ENCODE measurements at regions of chrX and their contacts with region 1.

Region 1: GRCh38 chrX:69387567-69388487 is 116.3 kb upstream of the NALF2 start:
- DNase-seq: peak; percentile 82
- ATAC-seq: peak; percentile 98
- H3K4me3 Mint-ChIP-seq: no peak overlapping the region
- H3K27ac Mint-ChIP-seq: no peak overlapping the region
- H3K4me1 Mint-ChIP-seq: peaks cover 23% of the 10 kb centered on the region
- H3K27me3 Mint-ChIP-seq: peaks cover 28% of the 10 kb centered on the region
- CTCF ChIP-seq: peak; percentile 63

Region 2: DNA sequence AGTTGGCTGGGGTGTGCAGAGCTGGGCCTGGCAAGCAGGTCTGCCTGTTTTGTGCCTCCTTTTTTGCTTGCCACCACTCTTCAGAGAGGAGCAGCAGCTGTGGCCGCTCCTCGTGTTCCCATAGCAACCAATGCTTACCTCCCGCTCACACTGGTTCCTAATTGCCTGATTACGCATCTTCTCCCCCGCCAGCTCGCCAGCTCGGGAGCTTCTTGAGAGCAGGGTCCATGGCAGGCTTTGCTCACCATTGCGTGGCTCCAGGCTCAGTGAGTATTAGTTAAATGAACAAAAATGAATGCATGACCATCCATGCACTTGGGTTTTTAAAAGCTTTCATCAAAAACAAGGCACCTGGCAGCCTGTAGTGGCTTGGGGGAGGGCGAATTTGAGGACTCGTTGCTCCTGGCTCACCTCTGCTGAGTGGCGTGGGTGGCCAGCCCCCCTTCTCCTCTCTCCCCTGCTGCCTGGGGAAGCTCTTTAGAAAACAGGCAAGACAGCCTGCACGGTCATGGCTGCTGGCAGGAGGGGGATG is 208.4 kb before region 1 on chrX:
- CTCF ChIA-PET with region 1: interaction called, 11 read pairs
- POLR2A ChIA-PET with region 1: no interaction called
- DNase-seq: peak; percentile 33
- ATAC-seq: peak; percentile 81
- H3K4me3 Mint-ChIP-seq: no peak overlapping the region
- H3K27ac Mint-ChIP-seq: no peak overlapping the region
- H3K4me1 Mint-ChIP-seq: peaks cover 22% of the 10 kb centered on the region
- H3K27me3 Mint-ChIP-seq: peaks cover 27% of the 10 kb centered on the region
- CTCF ChIP-seq: no peak

Region 3: DNA sequence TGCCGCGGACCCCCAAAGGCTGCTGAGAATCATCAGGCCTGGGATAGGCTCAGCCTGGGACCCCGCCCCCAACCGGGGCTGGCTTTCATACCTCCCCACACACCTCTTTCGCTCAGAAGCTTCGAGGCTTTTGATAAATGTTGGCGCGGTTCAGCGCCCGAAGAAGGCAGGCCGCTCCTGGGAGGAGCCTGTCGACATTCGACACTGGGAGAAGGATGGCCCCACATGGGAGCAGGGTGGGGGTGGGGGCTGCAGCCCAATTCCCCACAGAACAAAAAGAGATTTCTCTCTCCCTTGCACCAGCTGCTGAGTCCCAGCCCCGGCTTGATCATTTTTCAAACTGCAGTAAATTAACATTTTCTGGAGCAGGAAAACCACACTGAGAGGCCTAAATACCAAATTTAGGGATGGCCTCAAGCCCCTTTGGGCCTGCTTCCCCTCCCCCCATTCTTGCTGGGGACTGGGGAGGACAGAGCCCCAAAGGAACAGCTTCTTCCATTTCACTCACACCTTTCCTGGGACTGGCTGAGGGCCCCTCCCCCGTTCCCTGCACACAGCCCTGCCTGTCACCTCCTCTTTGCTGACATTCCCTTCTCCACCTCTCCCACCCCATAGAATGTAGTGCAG is 109.7 kb before region 1 on chrX:
- CTCF ChIA-PET with region 1: interaction called, 13 read pairs
- POLR2A ChIA-PET with region 1: no interaction called
- DNase-seq: peak; percentile 44
- ATAC-seq: peak; percentile 83
- H3K4me3 Mint-ChIP-seq: no peak overlapping the region
- H3K27ac Mint-ChIP-seq: no peak overlapping the region
- H3K4me1 Mint-ChIP-seq: peaks cover 34% of the 10 kb centered on the region
- H3K27me3 Mint-ChIP-seq: peaks cover 95% of the 10 kb centered on the region
- CTCF ChIP-seq: no peak

Region 4: GRCh38 chrX:69293776-69294601 is 93.8 kb before region 1 on chrX:
- CTCF ChIA-PET with region 1: interaction called, 33 read pairs
- POLR2A ChIA-PET with region 1: interaction called, 3 read pairs
- DNase-seq: no peak
- ATAC-seq: no peak
- H3K4me3 Mint-ChIP-seq: no peak overlapping the region
- H3K27ac Mint-ChIP-seq: no peak overlapping the region
- H3K4me1 Mint-ChIP-seq: peaks cover 13% of the 10 kb centered on the region
- H3K27me3 Mint-ChIP-seq: peaks cover 4% of the 10 kb centered on the region
- CTCF ChIP-seq: no peak

Region 5: GRCh38 chrX:69362856-69363255 is 25.0 kb before region 1 on chrX:
- CTCF ChIA-PET with region 1: interaction called, 11 read pairs
- POLR2A ChIA-PET with region 1: no interaction called
- DNase-seq: no peak
- ATAC-seq: no peak
- H3K4me3 Mint-ChIP-seq: no peak overlapping the region
- H3K27ac Mint-ChIP-seq: no peak overlapping the region
- H3K4me1 Mint-ChIP-seq: no peaks in the 10 kb centered on the region
- H3K27me3 Mint-ChIP-seq: peaks cover 7% of the 10 kb centered on the region; the same call in 1 of the 2 replicates
- CTCF ChIP-seq: no peak